Colonic mucosa (tissue), 4 donors: ENCODE measurements at regions of chr5 and their contacts with region 1.

Region 1: DNA sequence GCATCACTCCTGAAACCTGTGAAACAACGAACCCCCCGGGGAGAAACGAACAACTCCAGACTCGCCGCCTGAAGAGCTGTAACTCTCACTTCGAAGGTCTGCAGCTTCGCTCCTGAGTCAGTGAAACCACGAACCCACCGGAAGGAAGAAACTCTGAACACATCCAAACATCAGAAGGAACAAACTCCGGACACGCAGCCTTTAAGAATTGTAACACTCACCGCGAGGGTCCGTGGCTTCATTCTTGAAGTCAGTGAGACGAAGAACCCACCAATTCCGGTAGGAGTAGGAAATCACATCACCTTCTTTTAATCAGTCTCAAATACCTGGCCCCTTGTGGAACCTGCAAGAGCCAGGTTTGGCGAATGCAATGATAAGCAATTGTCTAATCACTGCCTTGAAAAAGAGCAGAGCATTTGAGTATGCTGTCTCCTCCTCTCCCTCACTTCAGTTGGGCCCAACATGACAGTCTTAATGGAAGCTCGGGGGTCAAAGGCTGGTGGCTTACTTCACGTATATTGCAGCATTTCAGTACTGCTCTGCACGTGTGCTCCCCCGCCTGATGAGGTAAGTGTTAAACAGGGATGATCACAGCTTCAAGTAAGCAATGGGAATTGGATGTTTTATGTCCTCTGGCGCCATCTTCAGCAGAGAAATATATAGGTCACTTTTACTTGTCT is 473 bp downstream of the IRGM start:
- DNase-seq: peak; percentile 66
- H3K4me3 ChIP-seq: no peak overlapping the region
- H3K27ac ChIP-seq: no peak overlapping the region
- H3K4me1 ChIP-seq: no peaks in the 10 kb centered on the region
- H3K27me3 ChIP-seq: no peaks in the 10 kb centered on the region
- CTCF ChIP-seq: peak; percentile 50

Region 2: DNA sequence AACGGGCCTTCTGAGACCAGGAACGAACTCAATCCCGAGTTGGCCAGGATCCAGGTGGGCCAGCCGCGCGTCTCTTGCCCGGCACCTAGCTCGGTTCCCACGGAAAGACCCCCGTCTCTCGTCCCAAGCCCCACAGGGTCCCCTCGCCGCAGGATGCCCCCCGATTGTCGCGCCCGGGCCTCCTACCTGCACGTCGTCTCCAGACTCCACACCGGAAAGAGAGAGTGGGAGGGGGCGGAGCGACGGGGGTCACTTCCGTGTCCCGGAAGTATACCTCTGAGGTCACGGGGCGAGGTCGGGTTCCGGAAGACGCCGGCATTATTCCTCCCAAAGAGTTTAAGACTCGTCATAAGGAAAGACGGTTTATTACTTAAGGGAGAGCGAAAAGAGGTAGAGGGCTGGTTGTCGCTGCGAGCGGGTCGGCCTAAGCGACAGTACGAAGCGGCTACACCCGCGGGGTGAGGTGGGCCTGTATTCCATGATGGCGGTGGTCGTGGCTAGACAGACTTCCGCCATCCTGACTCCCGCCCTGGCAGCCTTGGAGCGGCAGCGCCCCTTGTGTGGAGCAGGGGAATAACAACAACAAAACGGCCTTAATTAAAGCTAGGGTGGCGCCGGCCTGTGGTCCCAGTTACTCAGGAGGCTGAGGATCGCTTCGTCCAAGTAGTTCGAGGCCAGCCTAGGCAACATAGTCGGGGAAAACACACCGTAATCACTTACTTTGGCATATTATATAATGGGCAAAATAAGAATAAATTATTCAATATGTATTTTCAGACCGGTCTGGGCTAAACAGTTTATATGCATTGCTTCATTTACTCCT is 397.1 kb before region 1 on chr5 and contains the start of gene RPS14:
- intact Hi-C with region 1: loop called (anchors 10 kb)
- DNase-seq: peak; percentile 96
- H3K4me3 ChIP-seq: peak within 1 kb of the TSS; percentile 71
- H3K27ac ChIP-seq: peak within 1 kb of the TSS; percentile 92
- H3K4me1 ChIP-seq: peaks cover 9% of the 10 kb centered on the region
- H3K27me3 ChIP-seq: no peaks in the 10 kb centered on the region
- CTCF ChIP-seq: peak; percentile 91
- total RNA-seq, gene RPS14: 1,643 to 1,700 TPM

Region 3: DNA sequence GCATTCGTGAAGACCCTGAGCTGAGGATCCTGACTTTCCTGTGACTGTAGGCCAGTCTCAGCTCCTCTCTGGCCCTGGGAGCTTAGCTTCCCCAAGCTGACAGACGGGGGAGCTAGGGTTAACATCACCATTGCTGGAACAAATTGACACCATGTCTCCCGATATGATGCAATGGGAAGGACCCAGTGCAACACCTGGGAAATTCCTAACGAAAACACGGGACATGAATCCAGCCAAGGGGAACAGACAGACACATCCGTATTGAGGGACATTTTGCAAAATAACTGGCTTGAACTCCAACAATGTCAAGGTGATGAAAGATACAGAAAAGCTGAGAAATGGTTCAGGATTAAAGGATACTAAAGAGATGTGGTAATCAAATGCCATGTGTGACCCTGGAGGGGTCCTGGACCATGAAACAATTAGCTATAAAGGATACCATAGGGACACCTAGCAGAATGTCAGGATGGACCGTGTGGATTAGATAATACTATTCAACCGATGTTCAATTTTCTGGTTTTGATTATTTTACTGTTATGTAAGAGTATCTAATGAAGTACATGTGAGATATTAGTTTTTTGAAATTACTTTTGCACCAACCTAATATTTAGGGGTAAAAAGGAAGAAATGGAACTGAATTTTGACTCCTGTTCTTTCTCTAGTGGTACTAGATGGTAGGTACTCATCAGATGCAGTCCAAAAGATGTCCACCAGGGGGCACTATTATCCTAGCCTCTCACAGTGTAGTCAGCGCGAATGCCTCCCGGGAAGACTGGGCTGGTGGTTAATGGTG is 286.2 kb before region 1 on chr5:
- intact Hi-C with region 1: loop called (anchors 5 kb)
- DNase-seq: peak; percentile 97
- H3K4me3 ChIP-seq: no peak overlapping the region
- H3K27ac ChIP-seq: no peak overlapping the region
- H3K4me1 ChIP-seq: no peaks in the 10 kb centered on the region
- H3K27me3 ChIP-seq: no peaks in the 10 kb centered on the region
- CTCF ChIP-seq: peak; percentile 89

Region 4: GRCh38 chr5:150656191-150657132 is 190.3 kb before region 1 on chr5:
- intact Hi-C with region 1: loop called (anchors 10 kb)
- DNase-seq: peak; percentile 79
- H3K4me3 ChIP-seq: peak overlapping the region; percentile 51
- H3K27ac ChIP-seq: no peak overlapping the region
- H3K4me1 ChIP-seq: no peaks in the 10 kb centered on the region
- H3K27me3 ChIP-seq: no peaks in the 10 kb centered on the region
- CTCF ChIP-seq: peak; percentile 36

Region 5: DNA sequence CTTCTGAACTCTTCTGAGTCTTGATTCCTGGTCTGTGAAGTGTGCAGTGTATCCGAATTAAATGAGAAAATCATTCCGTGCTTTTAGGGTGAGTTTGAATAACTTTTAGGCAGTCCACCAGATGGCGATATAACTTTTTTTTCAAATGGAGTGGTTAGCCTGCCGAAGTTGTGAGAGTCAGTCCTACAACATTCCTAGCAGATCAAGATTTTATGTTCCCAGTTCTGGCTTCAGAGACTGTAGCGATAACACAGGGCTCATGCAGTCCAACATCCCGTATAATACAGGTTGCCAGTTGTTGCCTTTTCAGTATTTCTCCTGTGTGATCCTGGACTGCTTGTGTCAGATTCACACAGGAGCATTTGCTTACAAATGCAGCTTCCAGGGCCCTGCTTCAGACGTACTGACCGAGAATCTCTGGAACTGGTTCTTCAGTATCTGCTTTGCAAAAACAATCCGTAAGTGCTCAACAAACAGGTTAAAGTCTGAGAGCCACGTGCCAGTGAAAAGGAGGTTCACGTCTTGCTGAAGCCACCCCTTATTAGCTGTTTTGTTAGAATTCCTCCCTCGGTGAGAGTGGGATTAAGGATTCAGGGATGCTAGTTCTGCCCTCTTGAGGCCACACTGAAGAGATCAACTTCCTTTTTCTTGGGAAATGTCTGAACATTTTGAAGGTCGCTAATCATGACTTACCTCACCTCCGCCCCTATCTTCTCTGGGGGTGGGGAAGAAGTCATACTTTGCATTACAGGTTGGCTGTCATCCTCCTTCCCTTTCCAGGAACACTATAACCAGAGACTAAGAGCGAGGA is 45.5 kb before region 1 on chr5:
- intact Hi-C with region 1: loop called (anchors 2 kb)
- DNase-seq: peak; percentile 37
- H3K4me3 ChIP-seq: peak overlapping the region; percentile 24
- H3K27ac ChIP-seq: peak overlapping the region; percentile 19
- H3K4me1 ChIP-seq: no peaks in the 10 kb centered on the region
- H3K27me3 ChIP-seq: no peaks in the 10 kb centered on the region
- CTCF ChIP-seq: peak; percentile 54